ENCODE measurements at regions of chr19 and their contacts with region 1.

Region 1: DNA sequence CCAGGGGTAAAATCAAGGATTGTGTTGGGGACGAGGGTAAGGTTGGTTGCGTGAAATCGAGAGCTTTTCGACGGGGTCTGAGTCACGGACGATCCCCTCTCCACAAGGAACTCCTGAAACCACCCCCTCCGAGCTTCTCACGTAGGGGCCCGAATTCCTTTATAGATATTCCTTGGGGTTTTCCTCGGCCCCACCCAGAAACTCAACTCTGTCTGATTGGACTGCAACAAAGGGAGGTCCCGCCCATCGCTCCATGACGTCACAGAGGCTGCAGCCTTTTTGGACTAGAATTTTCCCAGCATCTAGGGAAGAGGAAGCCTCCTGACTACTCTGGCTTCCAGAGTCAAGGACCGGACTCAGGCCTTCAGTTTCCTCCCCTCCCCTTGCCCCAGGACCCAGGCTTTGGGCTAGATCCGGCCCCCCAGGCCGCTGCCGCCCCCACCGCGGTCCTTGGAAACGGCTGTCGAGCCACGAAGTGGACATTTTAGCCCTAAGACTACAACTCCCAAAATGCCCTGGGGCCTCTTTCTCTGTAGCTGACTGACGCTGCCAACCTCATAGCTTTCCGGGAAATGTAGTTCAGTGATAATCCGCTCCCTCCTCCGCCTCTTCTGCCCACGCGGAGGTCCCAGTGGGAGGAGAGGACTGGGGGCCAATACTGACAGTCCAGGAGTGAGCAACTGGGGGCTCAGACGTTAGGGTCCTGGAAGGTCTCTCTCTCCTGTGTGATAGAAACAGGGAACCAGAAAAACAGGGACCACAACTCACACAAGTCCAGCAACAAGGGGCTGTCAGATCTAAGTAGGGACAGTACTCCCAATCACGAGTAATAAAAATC is at the start of gene IZUMO1:
- DNase-seq: peak; percentile 58
- H3K4me3 Mint-ChIP-seq: peak within 1 kb of the TSS; percentile 58
- H3K27ac Mint-ChIP-seq: peak within 1 kb of the TSS; percentile 28
- H3K4me1 Mint-ChIP-seq: peaks cover 13% of the 10 kb centered on the region
- H3K27me3 Mint-ChIP-seq: peaks cover 5% of the 10 kb centered on the region
- total RNA-seq, gene IZUMO1: 0.21 TPM in 1 of 2 replicates, not detected in the other

Region 2: DNA sequence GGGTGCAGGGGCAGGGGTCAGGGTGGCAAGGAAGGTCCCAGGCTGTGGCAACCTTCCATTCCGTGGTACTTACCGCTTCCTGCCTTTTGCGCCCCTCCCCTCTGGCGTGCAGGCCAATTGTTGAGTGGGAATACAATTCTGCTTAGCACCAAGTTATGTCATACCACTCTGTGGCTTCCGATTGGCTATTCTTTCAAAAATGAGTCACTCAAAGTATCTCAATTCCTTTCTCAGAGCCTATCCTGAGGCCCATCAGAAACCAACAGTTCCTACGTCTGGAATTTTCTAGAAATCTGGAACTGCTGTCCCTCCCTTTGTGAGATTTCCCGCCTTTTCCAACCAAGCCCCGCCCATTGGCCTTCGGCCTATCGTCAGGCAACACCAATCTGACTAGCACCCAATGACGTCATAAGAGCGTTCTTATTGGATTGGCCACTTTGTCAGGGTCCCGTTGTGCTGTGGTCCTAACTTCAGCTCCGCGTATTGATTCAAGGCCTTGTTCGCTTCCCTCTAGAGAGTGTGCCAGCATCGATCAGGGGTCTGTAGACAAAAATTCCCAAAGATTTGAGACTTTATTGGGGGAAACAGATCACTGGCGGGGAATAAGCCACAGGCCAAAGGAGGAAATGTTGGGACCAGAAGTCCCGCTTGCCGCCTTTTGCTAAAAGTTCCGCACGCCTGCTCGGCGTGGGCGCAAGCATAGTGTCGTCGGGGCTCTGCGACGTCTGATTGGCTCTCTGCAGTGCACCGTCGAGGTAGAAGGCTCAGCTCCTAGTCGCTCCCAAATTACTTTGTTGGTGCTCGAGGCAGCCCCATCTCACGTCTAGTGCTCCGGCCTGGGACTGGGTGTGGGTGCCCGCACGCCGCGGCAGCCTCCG is 85.9 kb before region 1 on chr19:
- intact Hi-C with region 1: loop called (anchors 5 kb)
- DNase-seq: peak; percentile 80
- H3K4me3 Mint-ChIP-seq: peak overlapping the region; percentile 40
- H3K27ac Mint-ChIP-seq: peak overlapping the region; percentile 91
- H3K4me1 Mint-ChIP-seq: peaks cover 6% of the 10 kb centered on the region
- H3K27me3 Mint-ChIP-seq: peaks cover 3% of the 10 kb centered on the region

Region 3: DNA sequence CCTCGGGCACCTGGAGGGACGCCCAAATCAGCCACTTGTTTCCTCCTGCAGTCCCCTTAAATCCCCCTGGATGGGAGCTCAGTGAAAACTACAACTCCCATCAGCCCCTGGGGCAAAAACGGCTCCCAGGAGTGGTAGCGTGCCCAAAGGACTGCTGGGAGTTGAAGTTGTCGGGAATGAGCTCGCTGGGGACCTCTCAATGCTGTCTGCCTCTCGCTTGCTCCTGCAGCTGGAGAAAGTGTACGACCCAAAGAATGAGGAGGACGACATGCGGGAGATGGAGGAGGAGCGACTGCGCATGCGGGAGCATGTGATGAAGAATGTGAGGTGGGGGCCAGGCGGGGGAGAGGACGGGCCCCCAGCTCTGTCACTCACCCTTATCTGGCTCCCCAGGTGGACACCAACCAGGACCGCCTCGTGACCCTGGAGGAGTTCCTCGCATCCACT is 171.9 kb after region 1 on chr19:
- intact Hi-C with region 1: no loop called
- DNase-seq: no peak
- H3K4me3 Mint-ChIP-seq: no peak overlapping the region
- H3K27ac Mint-ChIP-seq: no peak overlapping the region
- H3K4me1 Mint-ChIP-seq: no peaks in the 10 kb centered on the region
- H3K27me3 Mint-ChIP-seq: no peaks in the 10 kb centered on the region

Measured in activated T-helper 2 cell treated with anti-CD3 and anti-CD28 coated beads, Interferon-gamma antibody, Interleukin-2, Interleukin-4, amounts not matched to agents 10 μg/mL and 5 μg/mL and 100 μg/mL, durations not matched to agents 14 hours and 24 hours and 36 hours (primary cell).